ENCODE measurements at regions of chr17 and their contacts with region 1.

Region 1: GRCh38 chr17:40362696-40363110 is 1.8 kb downstream of the GJD3 start:
- DNase-seq: peak; percentile 85
- ATAC-seq: peak; percentile 89
- H3K4me3 ChIP-seq: peak overlapping the region; percentile 45 to 67 (median 60); a peak in 5 of 6 replicates
- H3K27ac ChIP-seq: no peak overlapping the region
- H3K4me1 ChIP-seq: peaks cover 41% of the 10 kb centered on the region
- H3K27me3 ChIP-seq: peaks cover 0 to 11% of the 10 kb centered on the region in 2 experiments; a peak in 2 of 5 replicates
- CTCF ChIP-seq: peak; percentile 97
- EP300 ChIP-seq: 0 out of 4 replicates have a peak, but pooled peaks of 1 of the 2 experiments have one; percentile 9
- POLR2A ChIP-seq: peak; percentile 48 to 67; a peak in 3 of 4 replicates
- RAD21 ChIP-seq: peak; percentile 90

Region 2: GRCh38 chr17:40203131-40203530 is 159.6 kb before region 1 on chr17:
- CTCF ChIA-PET with region 1: no interaction called
- POLR2A ChIA-PET with region 1: interaction called, 5 read pairs
- in situ Hi-C with region 1: loop called (anchors 10 kb)
- intact Hi-C with region 1: loop called (anchors 5 kb)
- DNase-seq: no peak
- ATAC-seq: no peak
- H3K4me3 ChIP-seq: no peak overlapping the region
- H3K27ac ChIP-seq: peak overlapping the region; percentile 0
- H3K4me1 ChIP-seq: peaks cover 78% of the 10 kb centered on the region
- H3K27me3 ChIP-seq: no peaks in the 10 kb centered on the region
- CTCF ChIP-seq: no peak
- EP300 ChIP-seq: no peak
- POLR2A ChIP-seq: no peak
- RAD21 ChIP-seq: no peak

Region 3: DNA sequence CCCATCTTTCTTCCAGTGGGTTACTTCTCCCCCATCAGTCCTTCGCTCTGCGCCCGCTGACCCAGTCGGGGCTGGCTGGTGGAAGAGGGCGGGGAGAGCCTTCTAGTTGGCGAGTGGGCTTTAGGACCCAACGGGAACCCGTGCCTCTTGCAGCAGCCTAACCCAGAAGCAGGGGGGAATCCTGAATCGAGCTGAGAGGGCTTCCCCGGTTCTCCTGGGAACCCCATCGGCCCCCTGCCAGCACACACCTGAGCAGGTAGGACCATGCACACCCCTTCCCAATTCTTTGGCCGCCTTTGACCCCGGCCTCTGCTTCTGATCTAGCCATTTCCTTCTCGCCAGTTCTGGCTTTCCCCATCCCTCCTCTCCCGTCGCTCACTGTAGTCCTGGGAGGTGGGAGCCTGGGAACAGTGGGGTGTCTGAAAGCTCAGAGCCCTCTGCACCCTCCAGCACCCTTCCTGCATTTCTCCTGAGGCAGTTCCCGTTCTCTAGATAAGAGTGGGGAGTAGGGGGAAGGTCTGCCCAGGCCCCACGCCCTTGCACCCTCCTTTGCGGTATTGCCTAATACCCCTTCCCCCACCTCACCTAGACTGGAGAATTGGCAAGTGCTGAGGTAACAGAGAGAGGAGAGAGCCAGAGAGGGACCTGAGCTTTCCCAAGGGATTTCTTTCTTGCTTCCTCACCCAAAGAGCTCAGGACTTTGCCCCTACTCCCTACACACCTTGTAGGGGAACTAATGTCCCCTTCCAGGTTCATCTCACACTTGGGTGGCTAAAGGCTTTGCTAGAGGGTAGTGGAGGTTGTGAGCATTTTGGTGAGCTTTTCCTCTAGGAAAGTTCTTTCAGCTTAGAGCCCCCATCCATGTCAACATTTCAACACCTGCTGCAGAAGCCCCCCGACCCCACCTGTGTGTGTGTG is 53.4 kb before region 1 on chr17 and contains the start of gene RARA:
- CTCF ChIA-PET with region 1: no interaction called
- POLR2A ChIA-PET with region 1: interaction called, 11 read pairs
- in situ Hi-C with region 1: no loop called
- intact Hi-C with region 1: no loop called
- DNase-seq: peak; percentile 51
- ATAC-seq: peak; percentile 74
- H3K4me3 ChIP-seq: peak within 1 kb of the TSS; percentile 78 to 89 (median 88)
- H3K27ac ChIP-seq: no peak within 1 kb of the TSS
- H3K4me1 ChIP-seq: peaks cover 76% of the 10 kb centered on the region
- H3K27me3 ChIP-seq: no peaks in the 10 kb centered on the region; a peak in 1 of 5 replicates
- CTCF ChIP-seq: no peak; the same call in 1 of the 2 replicates
- EP300 ChIP-seq: no peak
- POLR2A ChIP-seq: no peak
- RAD21 ChIP-seq: peak; percentile 35
- total RNA-seq, gene RARA: 8.6 and 8.9 TPM in 2 replicates

Region 4: GRCh38 chr17:40331743-40332641 is 30.7 kb before region 1 on chr17:
- CTCF ChIA-PET with region 1: no interaction called
- POLR2A ChIA-PET with region 1: no interaction called
- in situ Hi-C with region 1: no loop called
- intact Hi-C with region 1: no loop called
- DNase-seq: no peak
- ATAC-seq: peak; percentile 23
- H3K4me3 ChIP-seq: no peak overlapping the region
- H3K27ac ChIP-seq: peak overlapping the region; percentile 26
- H3K4me1 ChIP-seq: peaks cover 77% of the 10 kb centered on the region
- H3K27me3 ChIP-seq: no peaks in the 10 kb centered on the region
- CTCF ChIP-seq: no peak; the same call in 1 of the 2 replicates
- EP300 ChIP-seq: no peak
- POLR2A ChIP-seq: no peak
- RAD21 ChIP-seq: no peak

Region 5: DNA sequence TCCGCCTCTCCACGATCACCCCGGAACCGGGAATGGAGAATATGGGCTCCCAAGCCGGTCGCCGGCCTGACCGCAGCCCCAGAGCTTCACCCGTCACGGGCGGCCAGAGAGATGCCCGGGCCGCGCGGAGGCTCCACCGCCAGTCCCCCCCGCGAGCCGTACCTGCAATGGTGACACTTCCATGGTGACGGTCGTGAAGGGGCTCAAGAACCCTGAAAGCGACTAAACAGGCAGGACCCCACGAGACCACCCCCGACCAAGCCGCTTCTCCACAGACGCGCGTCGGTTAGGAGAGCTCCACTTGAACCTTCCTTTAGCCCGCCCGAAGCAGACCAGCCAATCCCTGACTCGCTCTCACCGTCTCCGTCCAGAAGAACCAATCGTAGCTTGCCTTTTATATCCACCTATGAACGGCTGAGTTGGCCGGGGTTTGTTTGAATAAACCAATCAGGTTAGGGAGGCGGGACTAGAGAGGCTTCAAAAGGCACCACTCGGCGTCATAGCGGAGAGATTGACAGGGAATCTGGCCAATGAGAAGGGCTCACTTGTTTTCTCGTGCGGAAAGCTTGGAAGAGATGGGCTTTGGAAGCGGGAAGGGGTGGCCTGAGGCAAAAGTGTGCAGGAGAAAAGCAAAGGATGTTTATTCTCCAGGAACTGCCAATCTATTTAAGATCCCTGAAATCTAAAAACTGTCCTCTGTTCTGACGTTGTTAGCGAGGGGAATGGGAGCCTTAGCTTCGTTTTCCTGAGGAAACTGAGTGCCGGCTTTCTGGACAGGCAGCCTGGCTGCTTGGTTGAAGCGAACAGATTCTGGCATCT is 55.1 kb after region 1 on chr17 and contains the start of gene TOP2A:
- CTCF ChIA-PET with region 1: interaction called, 19 read pairs
- POLR2A ChIA-PET with region 1: interaction called, 10 read pairs
- in situ Hi-C with region 1: no loop called
- intact Hi-C with region 1: loop called (anchors 1 kb)
- DNase-seq: peak; percentile 100
- ATAC-seq: peak; percentile 90
- H3K4me3 ChIP-seq: peak within 1 kb of the TSS; percentile 89 to 98 (median 96)
- H3K27ac ChIP-seq: peak within 1 kb of the TSS; percentile 82
- H3K4me1 ChIP-seq: peaks cover 79% of the 10 kb centered on the region
- H3K27me3 ChIP-seq: no peaks in the 10 kb centered on the region
- CTCF ChIP-seq: no peak
- EP300 ChIP-seq: 0 out of 4 replicates have a peak, but pooled peaks of 1 of the 2 experiments have one; percentile 12
- POLR2A ChIP-seq: peak; percentile 92 to 93
- RAD21 ChIP-seq: no peak; the same call in 1 of the 2 replicates
- total RNA-seq, gene TOP2A: 327 and 614 TPM in 2 replicates

Region 6: DNA sequence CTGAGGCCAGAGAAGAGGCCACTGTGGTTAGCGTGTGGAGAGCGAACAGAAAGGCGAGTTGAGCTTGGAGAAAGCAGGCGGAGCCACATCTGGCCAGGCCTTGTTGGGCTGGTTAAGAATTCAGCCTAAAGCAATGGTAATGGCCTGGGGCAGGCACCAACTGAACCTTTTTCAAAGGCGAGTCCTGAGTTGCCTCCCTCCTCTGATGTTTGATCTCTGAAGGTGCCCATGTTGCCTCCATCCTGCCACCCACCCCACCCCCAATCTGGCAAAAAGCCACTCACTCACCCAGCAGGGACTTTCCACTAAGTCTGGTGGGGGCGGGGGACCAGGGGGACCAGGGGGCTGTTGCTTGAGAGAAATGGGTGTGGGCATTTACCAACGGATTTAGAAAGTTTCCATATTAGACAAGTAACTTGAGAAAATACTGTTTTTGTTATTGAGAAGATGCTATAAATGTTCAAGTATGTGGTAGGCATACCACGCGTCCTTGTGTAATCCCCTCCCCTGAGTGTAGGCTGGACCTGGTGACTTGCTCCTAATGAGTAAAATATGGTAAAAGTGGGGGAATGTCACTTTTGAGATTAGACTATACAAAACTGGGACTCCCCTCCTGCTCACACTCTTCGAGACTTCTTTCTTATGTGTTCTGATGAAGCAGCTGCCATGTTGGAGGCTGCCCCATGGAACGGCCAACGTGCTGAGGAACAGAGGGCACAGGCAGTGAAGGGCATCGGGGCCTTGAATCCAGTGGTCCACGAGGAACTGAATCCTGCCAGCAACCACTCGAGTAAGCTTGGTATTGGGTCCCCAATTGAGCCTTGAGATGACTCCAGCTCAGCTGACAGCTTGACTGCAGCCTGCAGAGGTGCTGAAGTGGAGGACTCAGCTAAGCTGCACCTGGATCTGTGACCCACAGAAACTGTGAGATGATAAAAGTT is 168.6 kb after region 1 on chr17:
- CTCF ChIA-PET with region 1: interaction called, 16 read pairs
- POLR2A ChIA-PET with region 1: interaction called, 9 read pairs
- in situ Hi-C with region 1: loop called (anchors 5 kb)
- intact Hi-C with region 1: loop called (anchors 2 kb)
- DNase-seq: no peak
- ATAC-seq: no peak
- H3K4me3 ChIP-seq: no peak overlapping the region
- H3K27ac ChIP-seq: no peak overlapping the region
- H3K4me1 ChIP-seq: peaks cover 30% of the 10 kb centered on the region
- H3K27me3 ChIP-seq: no peaks in the 10 kb centered on the region
- CTCF ChIP-seq: no peak
- EP300 ChIP-seq: no peak
- POLR2A ChIP-seq: no peak
- RAD21 ChIP-seq: no peak

Measured in HepG2 (cell line).